Activated CD4-positive, alpha-beta T cell treated with anti-CD3 and anti-CD28 coated beads, Interleukin-2, amount 10 ng/mL, durations not matched to agents 7 days and 5 days (primary cell): ENCODE measurements at regions of chr2 and their contacts with region 1.

Region 1: DNA sequence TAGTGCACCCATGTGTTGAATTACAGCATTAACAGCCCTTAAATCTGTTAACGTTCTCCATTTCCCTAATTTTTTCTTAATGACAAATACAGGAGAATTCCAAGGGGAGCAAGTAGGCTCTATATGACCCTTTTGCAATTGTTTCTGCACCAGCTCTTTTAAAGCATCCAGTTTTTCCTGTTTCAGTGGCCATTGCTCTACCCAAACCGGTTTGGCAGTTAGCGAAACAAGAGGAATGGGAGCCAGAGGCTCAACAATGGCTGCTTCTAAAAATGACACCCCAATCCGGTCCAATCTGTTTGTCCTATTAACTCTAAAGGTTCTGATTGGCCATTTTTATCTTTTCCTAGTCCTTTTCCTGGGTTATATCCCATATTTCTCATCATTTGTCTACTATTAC is 15.1 kb upstream of the SUCLG1 start:
- DNase-seq: no peak
- H3K4me3 Mint-ChIP-seq: no peak overlapping the region
- H3K27ac Mint-ChIP-seq: no peak overlapping the region
- H3K4me1 Mint-ChIP-seq: no peaks in the 10 kb centered on the region
- H3K27me3 Mint-ChIP-seq: peaks cover 5% of the 10 kb centered on the region

Region 2: DNA sequence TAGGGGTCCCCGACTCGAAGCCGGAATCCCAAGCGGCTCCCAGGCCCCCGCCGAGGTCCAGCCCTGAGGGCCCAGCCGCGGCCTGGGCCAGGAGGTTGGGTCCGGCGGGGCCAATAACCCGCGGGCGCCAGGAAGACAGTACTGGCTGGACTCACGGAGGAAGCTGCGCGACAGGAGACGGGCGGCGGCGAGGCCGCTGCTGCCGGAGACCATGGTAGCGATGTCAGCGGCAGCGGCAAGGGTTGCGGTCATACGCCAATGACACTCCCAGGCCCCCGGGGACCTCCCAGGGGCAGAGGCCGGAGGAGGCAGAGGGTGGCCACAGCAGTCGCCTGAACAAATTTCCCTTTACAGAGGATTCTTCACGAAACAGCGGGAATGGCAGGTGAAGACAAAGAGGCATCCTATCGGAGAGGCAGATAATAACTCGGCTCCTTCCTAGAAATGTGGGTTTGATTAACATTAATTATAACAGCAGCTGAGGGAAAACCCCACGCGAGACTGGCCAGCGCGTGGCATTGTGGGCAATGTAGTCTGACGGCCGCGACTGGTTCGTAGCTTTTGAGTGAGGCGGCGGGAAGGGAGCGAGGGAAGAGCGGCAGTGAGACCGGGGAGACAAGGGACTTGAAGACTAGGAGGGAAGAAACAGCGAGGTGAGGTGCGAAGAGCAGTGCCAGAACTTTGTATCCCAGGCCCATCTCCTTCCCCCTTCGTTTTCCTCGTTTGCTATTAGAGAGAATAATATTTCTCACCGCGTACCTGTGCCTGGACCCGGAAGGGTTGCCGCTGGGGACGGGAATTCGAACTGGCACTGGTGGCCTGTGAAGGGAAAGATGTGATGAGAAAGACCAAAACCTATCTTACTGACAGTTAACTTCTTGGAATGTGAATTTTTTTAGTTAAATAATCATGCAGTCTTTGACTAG is 14.9 kb before region 1 on chr2 and contains the start of gene SUCLG1:
- CTCF ChIA-PET with region 1: interaction called, 10 read pairs
- POLR2A ChIA-PET with region 1: no interaction called
- DNase-seq: peak; percentile 88
- H3K4me3 Mint-ChIP-seq: peak within 1 kb of the TSS; percentile 83
- H3K27ac Mint-ChIP-seq: peak within 1 kb of the TSS; percentile 95
- H3K4me1 Mint-ChIP-seq: peaks cover 50% of the 10 kb centered on the region
- H3K27me3 Mint-ChIP-seq: no peaks in the 10 kb centered on the region
- total RNA-seq, gene SUCLG1: 73.4 to 79.7 TPM

Region 3: DNA sequence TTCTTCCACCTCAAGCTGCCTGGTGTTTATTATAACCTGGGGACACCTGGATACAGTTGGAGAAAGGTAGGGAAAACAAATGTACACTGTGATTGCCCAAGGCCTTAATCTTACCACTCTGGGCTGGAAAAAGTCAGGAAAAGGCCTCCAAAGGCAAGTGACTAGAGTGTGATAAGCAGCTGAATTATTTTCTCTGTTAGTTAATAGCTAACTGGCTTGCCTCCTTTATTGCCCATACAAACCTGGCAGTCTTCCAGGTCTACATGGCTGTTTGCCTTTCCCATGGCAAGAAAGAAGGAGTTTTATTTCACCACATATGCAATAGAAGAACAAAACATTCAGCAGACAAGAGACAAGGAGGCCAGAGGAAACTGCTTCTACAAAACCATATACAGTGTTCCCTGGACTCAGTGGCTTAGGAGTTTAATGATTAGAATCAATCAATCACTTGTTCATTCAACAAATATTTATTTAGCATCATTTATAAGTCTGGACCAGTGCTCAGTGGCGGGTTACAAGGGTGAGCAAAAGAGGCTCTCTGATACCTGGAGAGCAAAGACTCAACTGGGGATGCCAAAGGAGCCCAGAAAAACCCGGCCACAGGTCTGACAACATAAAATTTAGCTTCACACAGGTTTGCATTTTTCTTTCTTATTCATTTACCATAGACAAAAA is 12.4 kb after region 1 on chr2:
- CTCF ChIA-PET with region 1: no interaction called
- POLR2A ChIA-PET with region 1: no interaction called
- DNase-seq: no peak
- H3K4me3 Mint-ChIP-seq: no peak overlapping the region
- H3K27ac Mint-ChIP-seq: no peak overlapping the region
- H3K4me1 Mint-ChIP-seq: peaks cover 10% of the 10 kb centered on the region
- H3K27me3 Mint-ChIP-seq: no peaks in the 10 kb centered on the region

Region 4: GRCh38 chr2:84498150-84498799 is 24.1 kb after region 1 on chr2:
- CTCF ChIA-PET with region 1: no interaction called
- POLR2A ChIA-PET with region 1: no interaction called
- DNase-seq: no peak
- H3K4me3 Mint-ChIP-seq: no peak overlapping the region
- H3K27ac Mint-ChIP-seq: no peak overlapping the region
- H3K4me1 Mint-ChIP-seq: peaks cover 10% of the 10 kb centered on the region
- H3K27me3 Mint-ChIP-seq: no peaks in the 10 kb centered on the region